ENCODE measurements at regions of chr7 and their contacts with region 1.

Region 1: GRCh38 chr7:100503345-100503725 is 19.6 kb downstream of the NYAP1 start:
- DNase-seq: peak; percentile 72
- ATAC-seq: peak; percentile 55
- H3K4me3 ChIP-seq: peak overlapping the region in 2 of 3 experiments; percentile 21 to 36; a peak in 3 of 6 replicates
- H3K27ac ChIP-seq: peak overlapping the region; percentile 14
- H3K4me1 ChIP-seq: peaks cover 27% of the 10 kb centered on the region
- H3K27me3 ChIP-seq: no peaks in the 10 kb centered on the region
- CTCF ChIP-seq: no peak
- EP300 ChIP-seq: no peak; a peak in 1 of 4 replicates
- POLR2A ChIP-seq: no peak
- RAD21 ChIP-seq: no peak

Region 2: DNA sequence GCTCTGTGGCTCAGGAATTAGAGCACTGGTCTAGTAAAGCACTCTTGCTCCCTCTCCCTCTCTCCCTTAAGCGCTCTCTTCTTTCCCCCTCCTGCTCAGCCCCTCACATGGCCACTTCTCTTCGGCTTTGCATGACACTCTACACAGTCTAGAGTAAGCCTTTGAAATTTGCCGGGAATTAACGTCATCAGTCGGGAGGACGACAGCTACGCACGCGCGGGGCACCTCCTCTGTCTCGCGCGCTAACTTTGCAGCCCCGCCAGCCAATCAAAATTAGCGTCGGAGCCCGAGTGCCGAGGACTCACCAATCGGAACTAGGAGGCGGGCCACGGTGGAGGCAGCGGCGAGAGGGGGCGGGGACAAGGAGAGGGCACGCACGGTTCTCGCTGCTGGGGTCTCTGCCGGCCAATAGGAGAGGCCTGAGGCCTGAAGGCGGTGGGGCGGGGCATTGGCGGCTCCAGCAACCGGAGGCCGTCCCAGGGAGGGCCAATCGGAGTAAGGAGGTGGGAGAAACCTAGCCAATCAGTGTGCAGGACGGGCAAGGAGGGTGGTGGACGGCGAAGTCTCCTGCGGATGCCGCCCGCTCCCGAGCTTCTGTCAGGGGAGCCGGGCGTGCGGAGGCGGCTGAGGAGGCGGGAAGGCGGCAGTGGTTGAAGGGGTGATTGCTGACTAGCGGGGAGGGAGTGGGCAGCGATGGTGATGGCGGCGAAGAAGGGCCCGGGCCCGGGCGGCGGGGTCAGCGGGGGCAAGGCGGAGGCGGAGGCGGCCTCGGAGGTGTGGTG is 35.5 kb after region 1 on chr7 and contains the start of gene AGFG2:
- CTCF ChIA-PET with region 1: no interaction called
- POLR2A ChIA-PET with region 1: no interaction called
- in situ Hi-C with region 1: no loop called
- intact Hi-C with region 1: loop called (anchors 2 kb)
- DNase-seq: peak; percentile 99
- ATAC-seq: peak; percentile 94
- H3K4me3 ChIP-seq: peak within 1 kb of the TSS; percentile 93 to 98 (median 96)
- H3K27ac ChIP-seq: peak within 1 kb of the TSS; percentile 96
- H3K4me1 ChIP-seq: peaks cover 55% of the 10 kb centered on the region
- H3K27me3 ChIP-seq: no peaks in the 10 kb centered on the region; a peak in 1 of 5 replicates
- CTCF ChIP-seq: no peak
- EP300 ChIP-seq: no peak
- POLR2A ChIP-seq: peak in 1 of 2 experiments; percentile 93; a peak in 3 of 4 replicates
- RAD21 ChIP-seq: peak; percentile 28; the same call in 1 of the 2 replicates
- total RNA-seq, gene AGFG2: 117 and 132 TPM in 2 replicates

Region 3: DNA sequence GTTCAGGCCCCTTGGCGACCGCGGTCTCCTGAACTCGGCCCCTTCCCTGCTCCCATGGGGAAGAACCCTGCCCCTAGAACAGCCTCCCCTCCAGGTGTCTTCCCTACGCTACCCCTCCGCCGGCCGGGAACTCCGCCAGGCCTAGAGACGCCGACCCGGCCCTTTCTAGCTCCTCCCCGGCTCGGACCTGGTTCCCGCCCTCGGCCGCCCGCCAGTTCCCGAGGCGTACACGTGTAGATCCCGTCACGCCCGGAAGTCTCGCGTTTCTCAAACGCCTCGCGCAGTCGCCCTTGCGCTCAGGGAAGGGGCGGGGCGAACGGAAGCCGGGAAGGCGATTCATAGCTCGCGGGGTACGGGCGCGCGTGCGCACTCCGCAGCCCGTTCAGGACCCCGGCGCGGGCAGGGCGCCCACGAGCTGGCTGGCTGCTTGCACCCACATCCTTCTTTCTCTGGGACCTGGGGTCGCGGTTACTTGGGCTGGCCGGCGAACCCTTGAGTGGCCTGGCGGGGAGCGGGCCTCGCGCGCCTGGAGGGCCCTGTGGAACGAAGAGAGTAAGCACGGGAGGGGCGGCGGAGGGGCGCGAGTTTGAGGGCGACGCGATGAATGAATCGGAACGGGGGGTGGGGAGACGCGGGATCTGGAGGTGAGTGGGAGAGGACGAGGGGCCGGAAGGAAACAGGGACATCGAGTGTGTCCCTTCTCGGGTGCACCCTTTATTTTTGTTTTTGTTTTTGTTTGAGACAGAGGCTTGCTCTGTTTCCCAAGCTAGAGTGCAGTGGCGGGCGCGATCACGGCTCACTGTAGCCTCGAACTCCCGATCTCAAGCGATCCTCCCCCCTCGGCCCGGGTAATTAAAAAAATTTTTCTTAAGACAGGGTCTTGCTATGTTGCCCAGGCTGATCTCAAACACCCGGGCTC is 202.7 kb after region 1 on chr7 and contains the start of gene POP7:
- CTCF ChIA-PET with region 1: no interaction called
- POLR2A ChIA-PET with region 1: no interaction called
- in situ Hi-C with region 1: no loop called
- intact Hi-C with region 1: no loop called
- DNase-seq: peak; percentile 94
- ATAC-seq: peak; percentile 93
- H3K4me3 ChIP-seq: peak within 1 kb of the TSS; percentile 93 to 98 (median 98)
- H3K27ac ChIP-seq: peak within 1 kb of the TSS; percentile 84
- H3K4me1 ChIP-seq: peaks cover 30% of the 10 kb centered on the region
- H3K27me3 ChIP-seq: no peaks in the 10 kb centered on the region
- CTCF ChIP-seq: no peak
- EP300 ChIP-seq: no peak
- POLR2A ChIP-seq: peak; percentile 51 to 89
- RAD21 ChIP-seq: no peak
- total RNA-seq, gene POP7: 91.1 and 91.5 TPM in 2 replicates